ENCODE measurements at regions of chr5 and their contacts with region 1.

Region 1: GRCh38 chr5:123371575-123372179 is 51.5 kb downstream of the CEP120 start:
- H3K4me3 Mint-ChIP-seq: no peak overlapping the region
- H3K27ac Mint-ChIP-seq: no peak overlapping the region
- H3K4me1 Mint-ChIP-seq: no peaks in the 10 kb centered on the region
- H3K27me3 Mint-ChIP-seq: no peaks in the 10 kb centered on the region

Region 2: GRCh38 chr5:122192497-122193496 is 1178.9 kb before region 1 on chr5:
- intact Hi-C with region 1: loop called (anchors 10 kb)
- H3K4me3 Mint-ChIP-seq: no peak overlapping the region
- H3K27ac Mint-ChIP-seq: no peak overlapping the region
- H3K4me1 Mint-ChIP-seq: no peaks in the 10 kb centered on the region
- H3K27me3 Mint-ChIP-seq: peaks cover 14% of the 10 kb centered on the region

Region 3: DNA sequence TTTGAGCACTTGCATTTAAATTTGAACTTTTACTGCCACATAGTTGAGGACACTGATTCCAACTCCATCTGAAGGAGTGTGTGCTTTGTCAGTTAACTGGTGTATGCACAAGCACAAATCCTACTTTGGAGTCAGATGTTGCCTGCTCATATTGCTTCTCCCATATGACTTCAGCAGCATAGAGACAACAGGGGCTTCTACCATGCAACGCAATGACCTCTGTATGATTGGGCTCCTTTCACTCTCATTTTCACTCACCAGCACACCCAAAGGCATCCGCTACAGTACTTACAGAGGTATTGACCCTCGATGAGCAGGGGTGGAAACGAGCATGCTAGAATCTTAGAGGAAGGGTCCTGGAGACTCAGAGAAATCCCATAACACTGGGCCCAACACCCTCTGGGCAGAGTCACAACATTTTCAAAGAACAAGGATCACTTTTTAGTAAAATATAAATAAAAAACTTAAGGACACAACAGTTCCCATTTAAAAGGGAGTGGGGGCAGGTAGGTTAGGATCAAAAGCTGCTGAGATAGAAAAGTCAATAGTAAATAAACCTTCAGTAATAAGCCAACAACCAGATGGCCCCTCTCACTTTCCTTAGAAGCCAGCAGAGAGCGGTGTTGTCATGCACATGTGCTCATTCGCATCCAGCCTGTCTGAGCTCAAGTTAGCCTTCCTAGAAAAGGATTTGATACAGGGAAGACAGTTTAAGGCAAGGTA is 855.8 kb before region 1 on chr5:
- intact Hi-C with region 1: loop called (anchors 2 kb)
- H3K4me3 Mint-ChIP-seq: no peak overlapping the region
- H3K27ac Mint-ChIP-seq: no peak overlapping the region
- H3K4me1 Mint-ChIP-seq: no peaks in the 10 kb centered on the region
- H3K27me3 Mint-ChIP-seq: no peaks in the 10 kb centered on the region

Region 4: GRCh38 chr5:122896598-122897282 is 474.9 kb before region 1 on chr5:
- intact Hi-C with region 1: loop called (anchors 5 kb)
- H3K4me3 Mint-ChIP-seq: no peak overlapping the region
- H3K27ac Mint-ChIP-seq: no peak overlapping the region
- H3K4me1 Mint-ChIP-seq: peaks cover 10% of the 10 kb centered on the region
- H3K27me3 Mint-ChIP-seq: no peaks in the 10 kb centered on the region

Measured in dendritic cell treated with granulocyte-macrophage colony-stimulating factor and Interleukin-4, amounts not matched to agents 40 ng/mL and 50 ng/mL, for 4 days (primary cell).